ENCODE measurements at regions of chr10 and their contacts with region 1.

Region 1: GRCh38 chr10:73413528-73414229 is at the start of gene ANXA7:
- DNase-seq: peak; percentile 97
- H3K4me3 Mint-ChIP-seq: peak within 1 kb of the TSS; percentile 92
- H3K27ac Mint-ChIP-seq: peak within 1 kb of the TSS; percentile 90
- H3K4me1 Mint-ChIP-seq: peaks cover 33% of the 10 kb centered on the region
- H3K27me3 Mint-ChIP-seq: no peaks in the 10 kb centered on the region
- total RNA-seq, gene ANXA7: 169 and 171 TPM in 2 replicates

Region 2: DNA sequence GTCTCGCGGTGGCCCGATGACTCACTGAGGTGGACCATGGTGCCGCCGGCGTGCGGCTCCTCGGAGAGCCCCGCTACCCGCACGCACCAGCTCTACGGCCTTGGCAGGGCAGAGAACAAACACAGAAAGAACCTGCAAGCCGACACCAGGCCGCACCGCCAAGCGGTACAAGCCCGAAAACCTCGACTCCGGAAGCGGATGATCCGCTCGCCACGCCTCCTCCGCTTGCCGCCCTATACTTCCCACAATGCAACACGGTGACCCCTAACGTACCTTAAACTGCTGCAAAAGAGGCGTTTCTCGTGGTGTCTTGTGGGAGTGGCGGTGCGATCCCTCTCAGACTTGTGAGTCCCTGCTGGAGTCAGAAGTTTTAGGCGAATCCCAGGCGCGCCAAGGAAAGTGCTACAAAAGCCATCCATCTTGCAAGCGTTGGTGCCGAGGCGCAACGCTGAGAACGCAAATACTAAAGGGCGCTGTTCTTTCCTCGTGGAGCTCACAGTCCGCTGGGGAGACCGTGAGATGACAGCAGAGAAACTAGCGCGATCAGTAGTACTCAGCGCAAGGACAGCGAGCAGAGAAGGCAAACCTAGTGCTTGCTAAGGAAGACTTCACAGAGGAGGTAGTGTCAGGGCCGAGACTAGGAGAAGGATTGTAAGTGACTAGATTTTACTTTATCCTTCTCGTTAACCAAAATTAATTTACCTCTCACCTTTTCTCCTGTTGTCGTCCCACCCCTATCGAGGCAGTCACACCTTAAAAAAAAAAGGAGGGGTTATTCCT is 161.0 kb before region 1 on chr10 and contains the start of gene MRPS16:
- intact Hi-C with region 1: loop called (anchors 2 kb)
- DNase-seq: peak; percentile 98
- H3K4me3 Mint-ChIP-seq: peak within 1 kb of the TSS; percentile 94
- H3K27ac Mint-ChIP-seq: peak within 1 kb of the TSS; percentile 96
- H3K4me1 Mint-ChIP-seq: peaks cover 34% of the 10 kb centered on the region
- H3K27me3 Mint-ChIP-seq: no peaks in the 10 kb centered on the region
- total RNA-seq, gene MRPS16: 164 TPM in 2 replicates

Region 3: DNA sequence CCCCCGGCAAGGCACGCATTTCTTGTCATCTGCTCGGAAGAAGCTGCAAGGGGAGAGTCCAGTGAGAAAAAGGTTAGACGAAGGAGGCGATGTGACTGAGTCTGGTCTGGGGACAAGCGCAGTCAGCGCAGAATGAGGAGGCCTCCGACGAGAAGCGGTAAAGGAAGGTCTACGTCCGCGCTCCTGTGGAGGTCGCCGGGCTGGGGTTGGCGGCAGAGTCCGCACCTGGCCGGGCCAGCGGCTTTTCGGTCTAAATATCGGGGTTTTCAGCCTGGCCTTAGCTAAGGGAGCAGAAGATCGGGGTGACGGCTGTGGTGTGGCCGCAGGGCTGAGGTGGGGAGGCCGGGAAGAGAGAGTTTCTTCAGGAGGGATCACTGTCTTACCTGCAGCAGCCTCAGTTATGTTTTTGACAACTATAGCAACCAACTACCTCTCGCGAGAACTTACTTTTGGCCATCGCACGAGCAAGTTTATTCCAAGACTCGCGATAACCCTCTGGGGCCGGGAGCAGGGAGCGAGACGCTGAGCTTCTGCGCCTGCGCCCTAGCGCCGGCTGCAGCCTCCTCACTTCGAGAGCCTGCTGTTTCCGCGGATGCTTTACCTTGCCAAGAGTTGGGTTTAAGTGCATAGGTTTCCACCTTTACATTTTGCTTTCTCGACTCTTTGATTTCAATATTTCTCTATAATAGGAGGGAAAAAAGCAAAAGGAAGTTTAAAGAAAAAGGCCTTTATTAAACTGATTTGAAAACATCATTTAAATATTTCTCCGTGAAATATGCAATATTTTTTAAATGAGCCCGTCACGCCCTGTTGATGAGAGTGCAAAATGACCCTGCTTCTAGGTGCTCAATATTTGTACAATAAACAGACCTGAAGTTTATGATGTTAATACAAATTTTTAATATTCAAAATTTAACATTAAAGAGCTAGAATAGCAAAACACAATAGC is 55.1 kb before region 1 on chr10 and contains the start of gene CFAP70:
- intact Hi-C with region 1: loop called (anchors 1 kb)
- DNase-seq: peak; percentile 98
- H3K4me3 Mint-ChIP-seq: peak within 1 kb of the TSS; percentile 93
- H3K27ac Mint-ChIP-seq: peak within 1 kb of the TSS; percentile 89
- H3K4me1 Mint-ChIP-seq: peaks cover 16% of the 10 kb centered on the region
- H3K27me3 Mint-ChIP-seq: peaks cover 15% of the 10 kb centered on the region
- total RNA-seq, gene CFAP70: 0.17 and 0.33 TPM in 2 replicates